AG04449 (cell line): ENCODE measurements at regions of chr1 and their contacts with region 1.

Region 1: DNA sequence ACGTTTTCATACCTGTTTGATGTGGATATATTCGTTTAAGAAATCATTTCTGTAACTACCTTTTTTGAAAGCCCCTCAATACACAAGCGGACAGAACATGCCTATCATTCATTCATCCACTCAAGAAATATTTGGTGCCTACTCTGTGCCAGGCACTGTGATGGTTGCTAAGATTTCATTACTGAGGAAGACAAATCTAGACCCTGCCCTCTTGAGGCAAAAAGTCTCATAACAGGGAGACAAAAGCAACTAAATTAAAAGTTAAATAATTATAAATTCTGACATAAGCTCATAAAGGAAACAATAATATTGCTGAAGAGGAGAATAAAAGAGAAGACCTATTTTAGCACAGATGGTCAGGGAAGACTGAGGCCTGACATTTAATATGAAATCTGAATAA is 203.5 kb upstream of the ZNHIT6 start:
- DNase-seq: no peak
- H3K4me3 ChIP-seq: no peak overlapping the region
- CTCF ChIP-seq: no peak

Region 2: GRCh38 chr1:85894651-85895050 is 17.1 kb before region 1 on chr1:
- CTCF ChIA-PET with region 1: interaction called, 22 read pairs
- POLR2A ChIA-PET with region 1: no interaction called
- DNase-seq: no peak
- H3K4me3 ChIP-seq: no peak overlapping the region
- CTCF ChIP-seq: peak; percentile 41